ENCODE measurements at regions of chr11 and their contacts with region 1.

Region 1: GRCh38 chr11:84117394-84117793 is 831.2 kb upstream of the CCDC90B start:
- DNase-seq: no peak
- H3K4me3 ChIP-seq: no peak overlapping the region
- H3K27ac ChIP-seq: no peak overlapping the region
- H3K4me1 ChIP-seq: no peaks in the 10 kb centered on the region
- H3K27me3 ChIP-seq: no peaks in the 10 kb centered on the region
- CTCF ChIP-seq: no peak
- EP300 ChIP-seq: no peak
- POLR2A ChIP-seq: no peak

Region 2: DNA sequence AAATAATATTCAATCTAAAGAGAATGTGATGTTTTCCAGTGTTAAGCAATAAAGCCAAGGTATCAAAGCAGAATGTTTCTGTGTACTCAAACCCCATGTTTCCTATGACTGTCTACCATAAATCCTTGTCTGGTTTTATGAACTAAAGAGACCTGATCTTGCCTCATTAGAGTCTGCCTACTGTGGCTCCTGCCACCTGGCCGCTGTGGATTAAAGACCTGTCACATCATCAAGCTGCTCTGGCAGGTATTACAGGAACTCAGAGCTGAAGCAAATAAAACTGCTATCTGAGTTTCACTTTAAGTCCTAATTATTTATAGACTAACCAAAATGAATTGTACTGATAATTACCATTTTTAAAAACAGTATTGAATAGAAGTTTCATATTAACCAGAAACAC is 623.5 kb before region 1 on chr11:
- in situ Hi-C with region 1: no loop called
- intact Hi-C with region 1: loop called (anchors 5 kb)
- DNase-seq: no peak
- H3K4me3 ChIP-seq: no peak overlapping the region
- H3K27ac ChIP-seq: no peak overlapping the region
- H3K4me1 ChIP-seq: no peaks in the 10 kb centered on the region
- H3K27me3 ChIP-seq: no peaks in the 10 kb centered on the region
- CTCF ChIP-seq: no peak
- EP300 ChIP-seq: no peak
- POLR2A ChIP-seq: no peak

Region 3: DNA sequence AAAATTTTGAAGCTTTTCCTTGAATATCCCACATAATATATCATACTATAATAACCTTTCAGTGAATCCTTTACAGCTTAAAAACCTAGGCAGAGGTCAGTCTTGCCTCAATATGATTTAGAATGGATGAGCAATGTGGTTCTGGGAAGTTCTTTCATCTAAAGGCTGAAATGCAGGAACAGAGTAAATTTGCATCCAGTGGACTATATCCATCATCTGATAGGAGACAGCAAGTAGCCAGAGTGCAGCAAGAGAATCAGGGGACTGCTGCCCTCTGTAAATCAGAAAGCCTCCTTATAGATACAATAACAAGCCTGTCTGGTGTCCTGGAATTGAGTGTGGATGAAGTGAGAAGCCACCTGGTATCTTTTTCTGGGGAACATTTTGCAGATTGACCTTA is 82.9 kb before region 1 on chr11:
- in situ Hi-C with region 1: no loop called
- intact Hi-C with region 1: no loop called
- DNase-seq: no peak
- H3K4me3 ChIP-seq: no peak overlapping the region
- H3K27ac ChIP-seq: no peak overlapping the region
- H3K4me1 ChIP-seq: no peaks in the 10 kb centered on the region
- H3K27me3 ChIP-seq: no peaks in the 10 kb centered on the region
- CTCF ChIP-seq: no peak
- EP300 ChIP-seq: no peak
- POLR2A ChIP-seq: no peak

Region 4: GRCh38 chr11:84289381-84289906 is 172.1 kb after region 1 on chr11:
- in situ Hi-C with region 1: no loop called
- intact Hi-C with region 1: no loop called
- DNase-seq: no peak
- H3K4me3 ChIP-seq: no peak overlapping the region
- H3K27ac ChIP-seq: no peak overlapping the region
- H3K4me1 ChIP-seq: no peaks in the 10 kb centered on the region
- H3K27me3 ChIP-seq: no peaks in the 10 kb centered on the region
- CTCF ChIP-seq: no peak
- EP300 ChIP-seq: no peak
- POLR2A ChIP-seq: no peak

Measured in transverse colon (tissue), 4 donors.